Heart right ventricle (tissue), 16 donors: ENCODE measurements at regions of chr13 and their contacts with region 1.

Region 1: DNA sequence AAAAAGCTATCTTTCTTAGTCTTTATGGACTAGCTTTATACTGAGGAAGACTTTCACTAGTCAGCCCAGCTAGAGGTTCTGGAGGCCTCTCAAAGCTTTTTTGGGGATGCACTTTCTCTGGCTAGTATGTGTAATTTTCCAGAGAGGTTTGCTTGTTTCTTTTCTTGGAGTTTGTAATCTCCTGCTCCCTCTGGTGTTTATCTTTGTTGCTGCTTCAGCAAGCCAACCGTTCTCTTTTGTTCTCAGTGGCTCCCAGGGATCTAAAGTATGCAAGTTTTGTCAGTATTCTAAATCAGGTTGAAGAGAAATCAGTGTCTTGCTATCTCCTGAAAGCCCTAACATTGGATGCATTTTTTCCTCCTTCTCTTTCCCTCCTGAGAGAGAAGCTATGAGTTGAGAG is 121.1 kb upstream of the MYO16 start:
- DNase-seq: no peak
- ATAC-seq: no peak
- H3K4me3 ChIP-seq: no peak overlapping the region
- H3K27ac ChIP-seq: no peak overlapping the region
- H3K4me1 ChIP-seq: no peaks in the 10 kb centered on the region
- H3K27me3 ChIP-seq: no peaks in the 10 kb centered on the region
- CTCF ChIP-seq: peak in 8 of 9 donors; percentile 6 to 54 (median 38)

Region 2: DNA sequence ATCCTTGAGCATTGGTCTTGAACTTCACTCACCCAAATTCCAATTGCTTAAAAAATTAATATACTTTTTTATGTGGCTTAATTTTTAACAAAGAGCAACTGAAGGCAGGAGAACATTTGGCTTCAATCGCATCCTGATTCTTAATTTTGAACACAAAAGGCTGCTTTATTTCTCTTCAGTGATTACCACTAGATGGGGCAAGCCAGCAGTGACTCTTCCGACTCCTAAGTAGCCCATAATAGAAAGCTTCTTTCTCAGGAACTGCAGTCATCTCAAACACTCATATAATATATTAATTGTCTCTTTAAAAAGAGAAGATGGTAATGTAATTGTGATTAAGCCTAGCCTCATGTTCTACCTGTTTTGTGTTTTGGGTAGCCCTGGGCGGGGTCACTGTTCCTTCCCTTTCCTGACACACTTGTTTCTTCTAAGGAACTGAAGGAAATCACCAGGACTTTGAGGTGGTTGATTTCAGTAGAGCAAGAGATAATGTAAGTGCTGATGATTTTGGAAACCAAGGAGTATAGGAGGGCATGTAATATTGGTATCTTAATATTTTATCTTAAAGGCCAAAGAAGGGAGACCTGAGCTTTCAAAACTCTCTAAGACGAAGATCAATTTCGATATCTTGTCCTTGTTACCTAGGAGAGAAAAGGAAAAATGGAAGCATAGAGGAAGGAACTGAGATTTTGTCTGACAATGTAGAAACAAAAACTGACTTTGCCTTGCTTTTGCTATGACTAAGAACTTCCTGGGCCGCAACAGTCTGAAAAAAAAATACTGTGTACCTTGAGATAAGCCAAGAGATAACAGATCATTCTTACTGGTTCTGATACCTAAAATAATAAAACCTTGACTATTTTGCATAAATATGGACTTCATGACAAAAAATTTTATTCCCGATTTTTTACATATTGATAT is 165.6 kb before region 1 on chr13:
- intact Hi-C with region 1: loop called in 3 of 10 experiments (anchors 5 to 10 kb)
- DNase-seq: no peak
- ATAC-seq: no peak
- H3K4me3 ChIP-seq: no peak overlapping the region
- H3K27ac ChIP-seq: no peak overlapping the region
- H3K4me1 ChIP-seq: peaks cover 0 to 15% (median 0%) of the 10 kb centered on the region in 9 donors
- H3K27me3 ChIP-seq: peaks cover 0 to 19% (median 0%) of the 10 kb centered on the region in 7 donors
- CTCF ChIP-seq: peak; percentile 21 to 68 (median 54)